Heart left ventricle (tissue), 16 donors: ENCODE measurements at regions of chr9 and their contacts with region 1.

Region 1: DNA sequence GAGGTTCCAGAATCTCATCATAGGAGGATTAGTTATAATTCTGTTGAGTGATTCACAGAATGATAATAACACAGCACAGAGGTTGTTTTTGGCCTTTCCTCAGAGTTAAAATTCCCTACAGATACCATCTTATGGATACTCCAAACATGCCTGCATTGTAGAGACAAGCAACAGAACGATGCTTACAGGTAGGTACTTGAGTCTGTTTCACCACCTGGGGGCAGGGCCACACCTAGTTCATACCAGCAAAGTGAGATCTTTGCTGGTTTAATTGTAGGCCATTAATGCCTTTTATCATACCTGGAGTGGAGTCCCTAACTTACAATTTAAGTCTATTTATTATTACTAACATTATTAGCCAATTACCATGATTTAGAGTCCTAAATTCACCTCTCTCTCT is 416.5 kb upstream of the TLE4 start:
- DNase-seq: no peak
- ATAC-seq: no peak
- H3K4me3 ChIP-seq: no peak overlapping the region
- H3K27ac ChIP-seq: no peak overlapping the region
- H3K4me1 ChIP-seq: no peaks in the 10 kb centered on the region
- H3K27me3 ChIP-seq: no peaks in the 10 kb centered on the region
- CTCF ChIP-seq: no peak
- POLR2A ChIP-seq: no peak

Region 2: GRCh38 chr9:79104216-79104615 is 51.1 kb before region 1 on chr9:
- intact Hi-C with region 1: loop called in 1 of 10 experiments (anchors 10 kb)
- DNase-seq: no peak
- ATAC-seq: no peak
- H3K4me3 ChIP-seq: no peak overlapping the region
- H3K27ac ChIP-seq: no peak overlapping the region
- H3K4me1 ChIP-seq: no peaks in the 10 kb centered on the region
- H3K27me3 ChIP-seq: no peaks in the 10 kb centered on the region
- CTCF ChIP-seq: no peak
- POLR2A ChIP-seq: no peak

Region 3: GRCh38 chr9:79140773-79141172 is 14.5 kb before region 1 on chr9:
- intact Hi-C with region 1: no loop called
- DNase-seq: no peak
- ATAC-seq: no peak
- H3K4me3 ChIP-seq: no peak overlapping the region
- H3K27ac ChIP-seq: no peak overlapping the region
- H3K4me1 ChIP-seq: no peaks in the 10 kb centered on the region
- H3K27me3 ChIP-seq: peaks cover 0 to 2% (median 0%) of the 10 kb centered on the region in 9 donors
- CTCF ChIP-seq: no peak
- POLR2A ChIP-seq: no peak